Panc1 (cell line): ENCODE measurements at regions of chr20 and their contacts with region 1.

Region 1: DNA sequence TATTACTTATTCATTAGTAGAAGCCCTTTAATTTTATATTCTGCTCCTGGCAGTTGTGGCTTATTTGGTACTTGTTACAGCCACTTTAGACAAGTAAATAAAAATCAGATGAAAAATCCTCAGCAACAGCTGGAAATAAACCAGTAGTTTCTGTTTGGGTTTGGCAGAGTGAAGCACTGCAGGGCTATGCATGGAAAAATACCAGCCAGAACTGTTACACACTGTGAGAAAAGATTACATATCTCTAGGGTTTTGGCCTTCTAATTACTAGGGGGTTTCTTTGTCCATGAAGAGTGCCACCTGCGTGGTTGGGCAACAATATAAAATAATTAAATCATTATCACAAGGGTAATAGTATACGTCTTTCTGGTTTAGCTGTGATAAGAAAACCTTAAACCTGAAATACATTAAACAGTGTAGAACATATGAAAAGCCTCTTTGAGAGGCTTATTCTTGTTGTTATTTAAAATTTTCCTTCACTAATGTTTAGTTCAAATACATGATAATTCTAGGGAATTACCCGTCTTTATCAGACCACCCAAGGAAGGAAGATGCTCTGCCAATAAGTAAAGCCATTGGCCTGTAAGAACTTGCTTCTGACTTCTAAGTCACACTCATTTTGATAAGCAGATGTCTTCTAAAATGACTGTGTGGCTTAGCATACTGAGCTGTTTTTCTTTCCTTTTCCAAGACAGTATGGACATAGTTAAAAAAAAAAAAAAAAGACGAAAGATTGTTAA is 320.0 kb upstream of the FLRT3 start:
- DNase-seq: no peak
- ATAC-seq: no peak
- H3K4me3 ChIP-seq: no peak overlapping the region
- H3K27ac ChIP-seq: no peak overlapping the region
- H3K4me1 ChIP-seq: no peaks in the 10 kb centered on the region
- H3K27me3 ChIP-seq: no peaks in the 10 kb centered on the region
- CTCF ChIP-seq: no peak

Region 2: GRCh38 chr20:14634665-14635064 is 22.8 kb before region 1 on chr20:
- CTCF ChIA-PET with region 1: no interaction called
- POLR2A ChIA-PET with region 1: no interaction called
- in situ Hi-C with region 1: no loop called
- intact Hi-C with region 1: loop called (anchors 1 kb)
- DNase-seq: no peak
- ATAC-seq: no peak
- H3K4me3 ChIP-seq: no peak overlapping the region
- H3K27ac ChIP-seq: no peak overlapping the region
- H3K4me1 ChIP-seq: no peaks in the 10 kb centered on the region
- H3K27me3 ChIP-seq: no peaks in the 10 kb centered on the region
- CTCF ChIP-seq: no peak

Region 3: GRCh38 chr20:14790771-14791620 is 133.6 kb after region 1 on chr20:
- CTCF ChIA-PET with region 1: no interaction called
- POLR2A ChIA-PET with region 1: no interaction called
- in situ Hi-C with region 1: no loop called
- intact Hi-C with region 1: no loop called
- DNase-seq: no peak
- ATAC-seq: no peak
- H3K4me3 ChIP-seq: no peak overlapping the region
- H3K27ac ChIP-seq: no peak overlapping the region
- H3K4me1 ChIP-seq: no peaks in the 10 kb centered on the region
- H3K27me3 ChIP-seq: no peaks in the 10 kb centered on the region
- CTCF ChIP-seq: no peak